ENCODE measurements at regions of chr3 and their contacts with region 1.

Region 1: GRCh38 chr3:111610189-111610588 is 15.0 kb upstream of the ZBED2 start:
- DNase-seq: peak; percentile 39
- H3K4me3 Mint-ChIP-seq: peak overlapping the region; percentile 69
- H3K27ac Mint-ChIP-seq: peak overlapping the region; percentile 98
- H3K4me1 Mint-ChIP-seq: peaks cover 93% of the 10 kb centered on the region
- H3K27me3 Mint-ChIP-seq: no peaks in the 10 kb centered on the region

Region 2: DNA sequence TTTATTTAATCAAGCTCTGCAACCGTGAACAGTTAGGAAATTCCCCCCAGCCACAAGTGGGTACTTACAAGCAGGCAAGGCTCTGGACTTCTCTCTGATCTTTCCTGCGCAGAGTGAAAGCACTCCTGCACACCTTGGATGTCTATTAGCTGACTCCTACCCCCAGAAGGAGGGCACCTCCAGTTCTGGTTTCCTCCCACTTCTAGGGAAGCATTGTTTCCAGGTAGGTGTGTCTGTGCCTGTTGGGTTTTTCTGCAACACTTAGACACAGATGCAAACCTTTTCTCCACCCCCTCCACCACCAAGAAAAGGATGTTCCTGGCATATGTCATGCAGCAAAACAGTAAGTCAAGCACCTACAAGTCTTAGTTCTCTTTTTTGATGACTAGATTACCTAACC is 15.0 kb before region 1 on chr3 and contains the start of gene ZBED2:
- intact Hi-C with region 1: loop called (anchors 2 kb)
- DNase-seq: no peak
- H3K4me3 Mint-ChIP-seq: peak within 1 kb of the TSS; percentile 97
- H3K27ac Mint-ChIP-seq: peak within 1 kb of the TSS; percentile 95
- H3K4me1 Mint-ChIP-seq: peaks cover 53% of the 10 kb centered on the region
- H3K27me3 Mint-ChIP-seq: no peaks in the 10 kb centered on the region
- total RNA-seq, gene ZBED2: 543 and 546 TPM in 2 replicates